ENCODE measurements at regions of chr17 and their contacts with region 1.

Region 1: DNA sequence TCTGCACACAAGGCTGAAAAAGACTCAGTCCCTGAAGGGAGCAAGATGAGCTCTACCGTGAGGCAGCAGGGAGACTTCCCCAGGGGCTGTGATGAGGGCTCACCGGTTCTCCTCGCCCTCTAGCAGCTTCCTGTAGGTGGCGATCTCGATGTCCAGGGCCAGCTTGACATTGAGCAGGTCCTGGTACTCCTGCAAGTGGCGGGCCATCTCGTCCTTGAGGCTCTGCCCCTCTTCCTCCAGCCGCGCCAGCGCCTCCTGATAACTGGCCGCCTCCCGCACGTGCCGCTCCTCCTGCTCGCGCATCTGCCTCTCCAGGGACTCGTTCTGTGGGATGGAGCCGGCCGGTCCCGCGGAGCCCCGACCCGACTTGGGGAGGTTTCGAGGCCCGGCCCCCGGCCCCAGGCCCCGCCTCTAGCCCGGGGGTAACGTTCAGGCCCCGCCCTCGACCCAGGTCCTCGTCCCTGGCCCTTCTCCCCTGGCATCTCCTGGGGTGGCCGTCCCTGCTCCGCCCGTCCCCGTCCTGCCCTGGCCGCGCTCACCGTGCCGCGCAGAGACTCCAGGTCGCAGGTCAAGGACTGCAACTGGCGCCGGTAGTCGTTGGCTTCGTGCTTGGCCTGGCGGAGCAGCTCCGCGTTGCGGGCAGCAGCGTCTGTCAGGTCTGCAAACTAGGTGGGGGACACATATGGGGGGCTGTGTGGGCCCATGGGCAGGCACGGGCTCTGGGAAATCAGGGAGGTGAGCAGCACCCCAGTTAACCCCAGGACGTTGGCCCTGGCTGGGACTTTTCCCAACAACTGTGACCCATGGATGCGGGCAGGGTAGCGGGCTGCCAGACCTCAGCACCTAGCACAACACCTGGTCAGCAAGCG is 3.9 kb downstream of the GFAP start:
- DNase-seq: peak; percentile 52 to 77
- H3K4me3 ChIP-seq: peak overlapping the region; percentile 16 to 40
- H3K27ac ChIP-seq: no peak overlapping the region
- H3K4me1 ChIP-seq: peaks cover 0 to 15% (median 7%) of the 10 kb centered on the region in 4 donors
- H3K27me3 ChIP-seq: peaks cover 0 to 21% of the 10 kb centered on the region in 2 donors
- CTCF ChIP-seq: peak; percentile 46 to 56

Region 2: GRCh38 chr17:44758414-44759085 is 152.8 kb before region 1 on chr17 and contains the start of gene ADAM11:
- intact Hi-C with region 1: no loop called
- DNase-seq: no peak
- H3K4me3 ChIP-seq: peak within 1 kb of the TSS; percentile 37 to 49
- H3K27ac ChIP-seq: no peak within 1 kb of the TSS
- H3K4me1 ChIP-seq: peaks cover 0 to 16% (median 13%) of the 10 kb centered on the region in 4 donors
- H3K27me3 ChIP-seq: peaks cover 0 to 58% of the 10 kb centered on the region in 2 donors
- CTCF ChIP-seq: no peak

Region 3: GRCh38 chr17:44829523-44830358 is 81.6 kb before region 1 on chr17 and contains the start of gene GJC1:
- intact Hi-C with region 1: no loop called
- DNase-seq: peak in 1 of 2 donors; percentile 70
- H3K4me3 ChIP-seq: peak within 1 kb of the TSS; percentile 71 to 82
- H3K27ac ChIP-seq: peak within 1 kb of the TSS; percentile 89 to 92
- H3K4me1 ChIP-seq: peaks cover 0 to 29% (median 10%) of the 10 kb centered on the region in 4 donors
- H3K27me3 ChIP-seq: peaks cover 0 to 6% of the 10 kb centered on the region in 2 donors
- CTCF ChIP-seq: no peak

Region 4: DNA sequence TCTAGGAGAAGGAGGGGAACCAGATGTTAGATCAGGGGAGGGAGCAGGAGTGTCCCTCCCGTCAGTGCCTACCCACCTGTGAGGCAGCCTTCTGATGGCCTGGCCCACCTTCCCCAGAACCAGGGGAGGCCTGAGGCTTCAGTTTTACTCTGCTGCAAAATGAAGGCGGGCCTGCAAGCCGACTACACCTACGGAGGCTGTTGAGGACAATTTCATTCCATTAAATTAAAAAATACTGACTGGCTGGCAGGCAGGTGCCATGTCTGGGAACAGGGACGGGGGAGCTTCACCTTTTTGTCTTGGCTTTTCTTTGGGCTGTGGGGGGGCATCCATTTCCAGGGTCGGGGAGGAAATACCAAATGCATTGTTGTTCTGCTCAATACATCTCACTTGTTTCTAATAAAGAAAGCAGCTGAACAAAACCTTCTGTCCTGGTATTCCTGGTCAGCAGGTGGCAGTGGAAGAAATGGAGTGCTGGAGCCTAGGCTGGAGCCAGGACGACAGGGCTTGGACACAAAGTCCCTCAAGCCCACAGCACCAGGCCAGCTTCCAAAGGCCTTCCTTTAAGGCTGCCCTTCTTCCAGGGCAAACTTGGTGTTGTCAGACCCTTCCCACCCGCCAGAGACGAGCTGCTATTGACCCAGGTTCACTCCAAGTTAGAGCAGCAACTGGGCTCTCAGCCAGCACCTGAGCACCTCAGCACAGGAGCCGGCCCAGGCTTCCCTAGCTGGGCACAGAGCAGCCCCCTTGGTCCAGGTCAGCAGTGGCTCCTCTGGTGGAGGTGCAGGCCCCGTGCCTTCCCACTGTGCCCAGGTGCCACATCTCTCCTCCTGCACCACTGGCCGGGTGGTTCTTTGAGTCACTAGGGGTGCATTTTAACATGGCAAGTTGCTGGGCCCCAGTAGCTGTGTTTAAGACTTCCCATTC is 197.5 kb after region 1 on chr17:
- intact Hi-C with region 1: loop called (anchors 5 kb)
- DNase-seq: no peak
- H3K4me3 ChIP-seq: no peak overlapping the region
- H3K27ac ChIP-seq: peak overlapping the region; percentile 87 to 91
- H3K4me1 ChIP-seq: peaks cover 4 to 76% (median 43%) of the 10 kb centered on the region in 4 donors
- H3K27me3 ChIP-seq: no peaks in the 10 kb centered on the region
- CTCF ChIP-seq: no peak

Measured in tibial artery (tissue), 4 donors.